ENCODE measurements at regions of chr18 and their contacts with region 1.

Region 1: GRCh38 chr18:43961722-43962121 is 684.4 kb upstream of the SYT4 start:
- DNase-seq: peak; percentile 12
- H3K4me3 Mint-ChIP-seq: peak overlapping the region; percentile 29
- H3K27ac Mint-ChIP-seq: peak overlapping the region; percentile 86
- H3K4me1 Mint-ChIP-seq: peaks cover 9% of the 10 kb centered on the region
- H3K27me3 Mint-ChIP-seq: no peaks in the 10 kb centered on the region
- CTCF ChIP-seq: no peak

Region 2: DNA sequence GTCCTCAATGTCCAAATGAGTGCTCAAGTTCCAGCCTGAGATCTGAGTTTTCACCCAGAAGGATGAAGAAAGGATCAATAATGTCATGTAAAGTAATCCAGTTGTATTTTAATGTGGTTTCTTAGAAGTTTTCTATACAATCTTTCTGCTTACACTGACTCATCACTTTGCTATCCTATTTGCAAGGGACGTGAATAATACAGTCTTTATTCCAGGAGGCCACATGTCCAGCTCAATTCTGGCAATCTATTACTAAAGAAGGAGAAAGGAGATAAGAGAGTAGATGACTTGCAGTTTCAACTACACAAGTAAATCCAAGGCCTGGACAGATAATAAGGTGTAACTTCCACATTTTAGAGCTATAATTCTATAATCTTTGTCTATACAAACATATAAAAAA is 117.9 kb after region 1 on chr18:
- CTCF ChIA-PET with region 1: no interaction called
- intact Hi-C with region 1: loop called (anchors 5 kb)
- DNase-seq: peak; percentile 35
- H3K4me3 Mint-ChIP-seq: peak overlapping the region; percentile 39
- H3K27ac Mint-ChIP-seq: peak overlapping the region; percentile 87
- H3K4me1 Mint-ChIP-seq: peaks cover 39% of the 10 kb centered on the region
- H3K27me3 Mint-ChIP-seq: no peaks in the 10 kb centered on the region
- CTCF ChIP-seq: no peak

Region 3: DNA sequence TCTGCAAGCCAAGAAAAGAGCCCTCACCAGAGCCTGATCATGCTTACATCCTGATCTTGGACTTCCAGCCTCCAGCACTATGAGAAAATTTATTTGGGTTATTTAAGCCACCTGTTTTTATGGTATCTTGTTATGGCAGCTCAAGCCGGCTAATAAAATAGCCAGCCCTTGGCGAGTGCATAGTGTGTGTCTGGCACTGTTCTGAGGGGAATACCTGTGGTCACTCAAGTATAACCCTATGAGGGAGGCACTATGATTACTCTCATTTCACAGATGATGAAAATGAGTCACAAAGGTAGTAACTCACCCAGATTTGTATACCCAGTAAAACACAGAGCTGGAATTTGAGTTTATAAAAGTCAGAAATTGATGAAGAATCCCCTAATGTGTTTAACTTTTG is 162.0 kb after region 1 on chr18:
- CTCF ChIA-PET with region 1: no interaction called
- intact Hi-C with region 1: loop called (anchors 5 kb)
- DNase-seq: no peak
- H3K4me3 Mint-ChIP-seq: no peak overlapping the region
- H3K27ac Mint-ChIP-seq: peak overlapping the region; percentile 24
- H3K4me1 Mint-ChIP-seq: peaks cover 29% of the 10 kb centered on the region
- H3K27me3 Mint-ChIP-seq: no peaks in the 10 kb centered on the region
- CTCF ChIP-seq: no peak